ENCODE measurements at regions of chr1 and their contacts with region 1.

Region 1: GRCh38 chr1:174999216-174999925 is 376 bp upstream of the CACYBP start:
- DNase-seq: peak; percentile 92 to 97
- H3K4me3 ChIP-seq: peak overlapping the region; percentile 92 to 96 (median 94)
- H3K27ac ChIP-seq: peak overlapping the region; percentile 100
- H3K4me1 ChIP-seq: peaks cover 0 to 4% (median 0%) of the 10 kb centered on the region in 4 experiments; a peak in 1 of 7 replicates
- H3K27me3 ChIP-seq: no peaks in the 10 kb centered on the region
- CTCF ChIP-seq: no peak; a peak in 1 of 4 replicates
- EP300 ChIP-seq: peak in 1 of 2 experiments; percentile 53; a peak in 1 of 3 replicates
- POLR2A ChIP-seq: peak; percentile 65 to 96
- RAD21 ChIP-seq: no peak

Region 2: DNA sequence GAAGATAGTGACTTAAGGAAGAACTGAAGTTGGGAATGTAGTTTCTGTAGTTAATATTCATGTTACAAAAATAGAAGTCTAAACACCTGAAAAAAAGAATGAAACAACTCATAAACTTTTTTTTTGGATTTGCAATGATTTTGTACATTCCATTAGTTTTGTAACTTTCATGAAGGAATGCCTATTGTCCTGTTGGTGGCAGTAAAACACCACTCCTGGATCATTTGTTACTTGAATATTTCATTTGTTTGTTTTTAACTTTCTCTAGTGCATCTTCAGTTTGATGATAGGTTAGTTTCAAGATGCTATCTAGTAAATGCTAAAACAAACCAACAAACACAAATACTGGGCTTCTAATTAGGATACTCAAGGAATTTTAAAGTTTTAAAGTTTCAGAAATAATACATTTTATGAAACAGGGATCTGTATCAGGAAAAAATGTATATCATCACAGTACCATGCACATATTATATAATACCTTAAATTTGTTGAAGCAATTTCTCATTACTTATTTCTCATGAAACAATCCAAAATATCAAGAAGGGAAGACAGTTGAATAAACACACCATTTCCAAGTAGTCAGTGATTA is 229.3 kb before region 1 on chr1:
- CTCF ChIA-PET with region 1: interaction called, 6 read pairs
- POLR2A ChIA-PET with region 1: interaction called, 28 read pairs
- DNase-seq: no peak
- H3K4me3 ChIP-seq: no peak overlapping the region
- H3K27ac ChIP-seq: no peak overlapping the region
- H3K4me1 ChIP-seq: peaks cover 0 to 4% (median 0%) of the 10 kb centered on the region in 4 experiments; a peak in 2 of 7 replicates
- H3K27me3 ChIP-seq: no peaks in the 10 kb centered on the region
- CTCF ChIP-seq: peak in 2 of 3 experiments; percentile 43 to 67; a peak in 2 of 4 replicates
- EP300 ChIP-seq: no peak
- POLR2A ChIP-seq: no peak
- RAD21 ChIP-seq: peak; percentile 81 to 93

Region 3: GRCh38 chr1:174800216-174800851 is 199.0 kb before region 1 on chr1:
- CTCF ChIA-PET with region 1: interaction called, 7 read pairs
- POLR2A ChIA-PET with region 1: interaction called, 13 read pairs
- DNase-seq: no peak
- H3K4me3 ChIP-seq: peak overlapping the region; percentile 46 to 59 (median 50); a peak in 7 of 8 replicates
- H3K27ac ChIP-seq: no peak overlapping the region
- H3K4me1 ChIP-seq: peaks cover 4 to 11% (median 8%) of the 10 kb centered on the region in 4 experiments
- H3K27me3 ChIP-seq: no peaks in the 10 kb centered on the region
- CTCF ChIP-seq: no peak
- EP300 ChIP-seq: no peak
- POLR2A ChIP-seq: no peak
- RAD21 ChIP-seq: no peak

Region 4: DNA sequence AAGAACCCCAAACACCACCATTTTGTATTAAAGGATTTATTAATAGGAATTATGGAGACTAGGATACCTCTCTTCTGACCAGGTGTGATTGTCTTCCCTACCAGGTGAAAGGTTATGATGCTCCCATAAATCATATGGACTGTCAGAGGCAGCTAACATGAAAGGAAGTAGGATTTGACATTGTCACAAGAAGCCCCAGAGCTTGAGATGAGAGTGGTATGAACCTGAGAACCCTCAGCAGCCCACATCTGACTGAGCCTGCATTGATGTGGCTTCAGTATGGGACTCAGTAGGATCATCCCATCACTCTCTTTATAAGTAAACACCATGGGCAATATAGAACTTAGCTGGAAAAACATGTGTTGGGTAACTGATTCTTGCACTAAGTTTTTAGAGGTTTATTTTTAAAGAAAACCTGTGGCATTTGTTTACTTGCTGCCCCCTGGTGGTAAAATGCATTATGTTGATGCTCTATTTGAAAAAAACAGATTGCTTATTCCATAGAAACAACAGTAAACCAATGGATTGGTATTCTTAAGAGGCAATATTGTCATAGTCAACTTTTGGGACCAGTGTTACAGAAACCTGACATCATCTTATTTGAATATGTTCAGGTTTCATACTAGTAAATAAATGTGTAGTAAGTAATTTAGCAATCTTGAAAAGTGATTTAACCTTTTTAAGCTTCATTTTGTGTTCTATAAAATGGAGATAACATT is 16.2 kb before region 1 on chr1:
- CTCF ChIA-PET with region 1: interaction called, 27 read pairs
- POLR2A ChIA-PET with region 1: interaction called, 38 read pairs
- DNase-seq: no peak
- H3K4me3 ChIP-seq: no peak overlapping the region
- H3K27ac ChIP-seq: no peak overlapping the region
- H3K4me1 ChIP-seq: no peaks in the 10 kb centered on the region
- H3K27me3 ChIP-seq: no peaks in the 10 kb centered on the region
- CTCF ChIP-seq: peak in 2 of 3 experiments; percentile 18 to 47; a peak in 2 of 4 replicates
- EP300 ChIP-seq: no peak
- POLR2A ChIP-seq: no peak
- RAD21 ChIP-seq: peak in 1 of 2 experiments; percentile 34; a peak in 2 of 4 replicates

Region 5: DNA sequence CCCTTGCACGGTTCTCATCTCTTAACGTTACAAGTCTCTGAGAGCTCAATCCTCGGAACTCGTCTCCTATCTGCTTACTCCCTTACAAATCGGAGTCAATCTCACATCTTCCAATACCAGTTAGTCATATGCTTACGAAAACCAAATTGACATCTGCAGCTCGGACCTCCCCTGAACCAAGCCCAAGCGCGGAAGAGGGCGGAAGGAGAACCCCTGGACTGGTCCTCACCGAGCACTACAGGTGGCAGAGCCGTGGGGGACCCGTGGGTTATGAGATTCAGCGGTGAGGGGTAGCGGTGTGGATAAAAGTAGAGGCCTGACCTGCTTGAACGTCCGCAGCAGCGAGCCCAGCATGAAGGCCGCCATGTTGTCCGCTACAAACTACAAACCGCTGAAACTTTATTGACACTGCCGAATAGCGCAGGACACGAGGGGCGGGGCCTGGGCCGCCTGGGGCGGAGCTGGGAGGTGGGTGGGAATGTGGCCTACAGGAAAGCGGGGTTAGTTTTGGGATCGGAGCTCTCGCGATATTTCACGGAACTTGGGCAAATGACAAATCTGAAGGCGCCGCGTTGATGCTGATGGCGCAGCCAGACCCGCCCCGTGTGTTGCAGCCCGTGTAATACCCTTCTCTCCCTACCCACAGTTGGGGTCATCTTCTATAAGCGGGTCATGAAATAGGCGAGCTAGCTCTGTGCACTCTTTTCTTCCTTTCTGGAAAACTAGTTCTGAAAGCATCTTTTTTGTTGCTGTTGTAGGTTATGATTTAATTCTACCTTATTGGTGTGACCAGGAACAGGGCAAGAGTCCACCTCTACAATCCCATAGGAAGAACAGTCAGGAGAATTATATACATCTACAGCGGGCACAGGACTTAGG is 23.9 kb after region 1 on chr1 and contains the start of gene MRPS14:
- CTCF ChIA-PET with region 1: interaction called, 4 read pairs
- POLR2A ChIA-PET with region 1: interaction called, 66 read pairs
- DNase-seq: peak; percentile 97 to 98
- H3K4me3 ChIP-seq: peak within 1 kb of the TSS; percentile 79 to 98 (median 97)
- H3K27ac ChIP-seq: peak within 1 kb of the TSS; percentile 57; the same call in 1 of the 2 replicates
- H3K4me1 ChIP-seq: no peaks in the 10 kb centered on the region
- H3K27me3 ChIP-seq: no peaks in the 10 kb centered on the region
- CTCF ChIP-seq: no peak
- EP300 ChIP-seq: no peak
- POLR2A ChIP-seq: peak; percentile 83 to 97
- RAD21 ChIP-seq: no peak
- total RNA-seq, gene MRPS14: 38.7 and 40.5 TPM in 2 replicates